Gastrocnemius medialis (tissue), 4 donors: ENCODE measurements at regions of chr16 and their contacts with region 1.

Region 1: DNA sequence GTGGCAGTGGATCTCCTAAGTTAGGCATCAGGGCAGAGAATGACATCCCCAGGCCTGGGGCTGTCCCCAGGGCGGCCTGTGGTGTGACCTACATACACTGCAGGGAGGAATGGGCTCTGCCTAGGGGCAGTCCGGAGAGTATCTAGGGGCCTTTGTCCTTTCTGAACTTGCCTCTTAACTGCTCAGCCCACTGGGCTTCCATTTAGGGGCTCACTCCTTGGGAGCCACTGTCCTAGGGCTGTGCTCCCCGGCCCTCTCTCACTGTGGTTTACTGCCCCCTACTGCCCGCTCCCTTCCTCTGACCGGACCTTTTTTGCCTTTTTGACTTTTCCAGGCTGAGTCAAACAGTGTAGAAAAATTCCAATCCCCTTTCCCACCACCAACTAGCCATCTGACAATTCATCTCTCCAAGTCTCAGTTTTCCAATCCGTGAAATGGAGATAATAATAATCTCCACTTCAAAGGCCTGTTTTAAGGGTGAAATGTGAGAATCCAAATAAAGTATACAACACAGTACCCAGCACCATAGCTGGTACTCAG is 66.8 kb downstream of the DNAH3 start:
- DNase-seq: peak; percentile 20 to 33
- ATAC-seq: peak; percentile 74 to 77
- H3K4me3 ChIP-seq: no peak overlapping the region
- H3K27ac ChIP-seq: no peak overlapping the region
- H3K4me1 ChIP-seq: no peaks in the 10 kb centered on the region
- H3K27me3 ChIP-seq: no peaks in the 10 kb centered on the region
- CTCF ChIP-seq: peak; percentile 51 to 75 (median 74)
- POLR2A ChIP-seq: no peak

Region 2: GRCh38 chr16:20801278-20801677 is 282.5 kb before region 1 on chr16:
- in situ Hi-C with region 1: no loop called
- intact Hi-C with region 1: loop called (anchors 2 kb)
- DNase-seq: no peak
- ATAC-seq: no peak
- H3K4me3 ChIP-seq: no peak overlapping the region
- H3K27ac ChIP-seq: no peak overlapping the region
- H3K4me1 ChIP-seq: peaks cover 3 to 12% of the 10 kb centered on the region in 2 donors
- H3K27me3 ChIP-seq: no peaks in the 10 kb centered on the region
- CTCF ChIP-seq: no peak
- POLR2A ChIP-seq: no peak

Region 3: GRCh38 chr16:20859699-20860098 is 224.1 kb before region 1 on chr16:
- in situ Hi-C with region 1: loop called (anchors 5 to 10 kb)
- intact Hi-C with region 1: no loop called
- DNase-seq: no peak
- ATAC-seq: peak in 1 of 2 donors; percentile 44
- H3K4me3 ChIP-seq: no peak overlapping the region
- H3K27ac ChIP-seq: peak overlapping the region; percentile 12 to 51 (median 34)
- H3K4me1 ChIP-seq: peaks cover 19% of the 10 kb centered on the region in 2 donors
- H3K27me3 ChIP-seq: no peaks in the 10 kb centered on the region
- CTCF ChIP-seq: no peak
- POLR2A ChIP-seq: no peak